Breast epithelium (tissue), 4 donors: ENCODE measurements at regions of chr14 and their contacts with region 1.

Region 1: GRCh38 chr14:27315477-27315876 is 717.6 kb upstream of the NOVA1 start:
- DNase-seq: no peak
- H3K4me3 ChIP-seq: no peak overlapping the region
- H3K27ac ChIP-seq: no peak overlapping the region
- H3K4me1 ChIP-seq: no peaks in the 10 kb centered on the region
- H3K27me3 ChIP-seq: no peaks in the 10 kb centered on the region
- CTCF ChIP-seq: no peak
- POLR2A ChIP-seq: no peak

Region 2: DNA sequence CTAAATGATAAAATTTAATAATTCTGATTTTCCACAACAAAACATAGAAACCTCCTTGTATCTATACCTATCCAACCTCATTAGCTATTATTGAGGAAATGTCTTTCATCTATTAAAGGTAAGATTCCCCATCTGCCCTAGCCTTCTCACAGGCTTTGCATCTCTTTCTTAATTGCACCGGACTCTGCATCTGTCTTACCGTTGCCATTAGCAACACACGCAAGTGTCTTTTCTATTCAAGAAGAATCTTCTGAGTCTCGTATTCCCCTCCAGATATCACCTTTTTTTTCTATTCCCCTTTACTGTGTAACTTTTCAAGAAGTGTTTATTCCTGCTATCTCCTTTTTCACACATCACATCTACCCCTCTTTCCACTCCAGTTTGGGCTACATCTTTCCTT is 1217.6 kb before region 1 on chr14:
- intact Hi-C with region 1: loop called (anchors 10 kb)
- DNase-seq: no peak
- H3K4me3 ChIP-seq: no peak overlapping the region
- H3K27ac ChIP-seq: no peak overlapping the region
- H3K4me1 ChIP-seq: no peaks in the 10 kb centered on the region
- H3K27me3 ChIP-seq: no peaks in the 10 kb centered on the region
- CTCF ChIP-seq: no peak
- POLR2A ChIP-seq: no peak

Region 3: DNA sequence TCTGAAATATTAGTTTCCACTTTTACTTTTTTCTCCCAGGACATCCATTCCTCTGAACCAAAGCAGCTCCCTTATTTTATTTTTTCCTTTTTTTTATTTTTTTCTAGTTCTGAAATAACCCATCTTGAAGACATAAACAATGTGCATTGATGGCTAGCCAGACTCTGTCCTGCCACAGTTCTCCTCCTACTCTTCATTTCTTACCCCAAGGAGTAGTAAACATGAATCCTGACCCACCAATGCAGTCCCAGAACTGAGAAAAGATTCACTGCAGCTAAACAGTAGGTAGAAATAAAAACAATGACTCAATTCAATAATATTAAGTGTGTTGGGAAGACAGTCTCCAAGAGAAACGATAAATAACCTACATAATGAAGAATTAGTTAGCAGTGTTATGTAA is 652.0 kb before region 1 on chr14:
- intact Hi-C with region 1: no loop called
- DNase-seq: no peak
- H3K4me3 ChIP-seq: no peak overlapping the region
- H3K27ac ChIP-seq: no peak overlapping the region
- H3K4me1 ChIP-seq: no peaks in the 10 kb centered on the region
- H3K27me3 ChIP-seq: no peaks in the 10 kb centered on the region
- CTCF ChIP-seq: no peak
- POLR2A ChIP-seq: no peak

Region 4: DNA sequence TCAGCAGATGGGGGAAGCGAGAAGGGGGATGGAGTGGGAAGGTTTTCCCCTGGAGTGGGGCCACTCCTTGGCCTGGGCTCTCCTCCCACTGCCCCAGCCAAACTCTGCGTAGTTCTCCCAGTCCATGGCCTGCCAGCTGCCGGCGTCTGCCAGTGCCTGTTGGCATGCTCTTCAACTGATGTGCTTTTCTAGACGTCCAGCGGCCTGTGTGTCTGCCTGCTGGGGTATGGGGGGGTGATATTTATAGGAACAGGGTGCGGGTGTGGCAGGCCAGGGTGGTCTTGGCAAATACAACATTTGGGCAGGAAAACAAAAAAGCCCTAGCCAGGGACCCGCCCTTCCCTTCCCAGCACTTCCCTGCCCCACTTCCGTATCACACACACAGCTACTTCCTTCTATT is 68.6 kb after region 1 on chr14:
- intact Hi-C with region 1: no loop called
- DNase-seq: no peak
- H3K4me3 ChIP-seq: no peak overlapping the region
- H3K27ac ChIP-seq: no peak overlapping the region
- H3K4me1 ChIP-seq: no peaks in the 10 kb centered on the region
- H3K27me3 ChIP-seq: no peaks in the 10 kb centered on the region
- CTCF ChIP-seq: no peak
- POLR2A ChIP-seq: no peak

Region 5: DNA sequence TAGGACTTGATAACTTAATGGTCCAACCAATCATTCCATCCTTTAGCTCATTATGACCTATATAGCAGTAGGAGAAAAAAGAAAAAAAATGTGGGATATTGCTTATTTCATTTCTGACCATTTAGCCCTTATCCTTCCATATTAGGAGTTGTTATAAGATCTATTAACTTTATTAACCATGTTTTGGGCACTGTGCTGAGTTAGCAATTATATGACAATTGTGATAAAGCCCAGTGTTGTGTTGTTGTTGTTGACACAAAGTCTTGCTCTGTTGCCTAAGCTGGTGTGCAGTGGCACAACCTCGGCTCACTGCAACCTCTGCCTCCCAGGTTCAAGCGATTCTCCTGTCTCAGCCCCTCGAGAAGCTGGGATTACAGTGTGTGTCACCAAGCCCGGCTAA is 881.4 kb after region 1 on chr14:
- intact Hi-C with region 1: loop called (anchors 5 kb)
- DNase-seq: no peak
- H3K4me3 ChIP-seq: no peak overlapping the region
- H3K27ac ChIP-seq: no peak overlapping the region
- H3K4me1 ChIP-seq: no peaks in the 10 kb centered on the region
- H3K27me3 ChIP-seq: no peaks in the 10 kb centered on the region
- CTCF ChIP-seq: no peak
- POLR2A ChIP-seq: no peak